ENCODE measurements at regions of chr12 and their contacts with region 1.

Region 1: DNA sequence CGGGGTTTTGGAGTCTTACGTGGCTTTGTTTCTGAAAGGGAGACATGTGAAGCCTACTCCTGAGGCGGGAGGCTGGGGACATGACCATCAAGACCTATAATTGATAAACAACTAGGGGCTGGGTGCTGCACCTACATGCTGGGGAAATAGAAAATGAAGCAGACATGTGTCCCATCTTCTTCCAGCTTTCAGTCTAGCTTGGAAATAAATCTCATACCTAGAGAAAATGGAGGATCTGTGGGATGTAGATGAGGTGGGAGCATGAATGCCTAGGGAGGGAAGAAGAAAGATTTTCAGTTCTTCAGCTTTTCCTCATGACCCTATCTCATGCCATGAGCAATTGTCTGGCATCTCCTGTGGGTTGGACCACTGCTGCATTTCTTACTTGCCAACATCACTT is 22.1 kb downstream of the EMP1 start:
- DNase-seq: no peak
- ATAC-seq: no peak
- H3K4me3 ChIP-seq: no peak overlapping the region
- H3K27ac ChIP-seq: no peak overlapping the region
- H3K4me1 ChIP-seq: peaks cover 3% of the 10 kb centered on the region
- H3K27me3 ChIP-seq: no peaks in the 10 kb centered on the region
- CTCF ChIP-seq: no peak
- POLR2A ChIP-seq: no peak

Region 2: DNA sequence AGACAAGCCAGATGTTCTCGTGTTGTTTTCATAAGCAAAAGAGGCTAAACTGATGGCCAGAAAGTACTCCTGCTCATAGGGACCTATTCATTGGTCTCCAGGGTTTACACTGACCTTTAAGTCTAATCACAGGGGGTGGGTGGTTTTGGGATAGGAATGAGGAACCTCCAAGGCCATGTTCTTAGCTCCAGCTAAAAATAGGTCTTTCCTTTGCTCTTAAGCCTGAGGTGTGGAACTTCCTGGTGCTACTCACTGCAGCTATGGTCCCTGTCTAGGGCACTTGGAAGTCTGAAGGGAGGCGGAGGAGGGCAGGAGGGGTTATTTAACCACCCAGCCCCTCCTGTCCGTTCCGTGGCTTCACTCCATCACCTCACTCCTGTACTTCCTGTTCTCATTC is 308.6 kb before region 1 on chr12:
- intact Hi-C with region 1: loop called (anchors 5 kb)
- DNase-seq: peak in 1 of 4 donors; percentile 29
- ATAC-seq: peak; percentile 42
- H3K4me3 ChIP-seq: no peak overlapping the region
- H3K27ac ChIP-seq: no peak overlapping the region
- H3K4me1 ChIP-seq: peaks cover 6% of the 10 kb centered on the region
- H3K27me3 ChIP-seq: no peaks in the 10 kb centered on the region
- CTCF ChIP-seq: no peak
- POLR2A ChIP-seq: no peak

Region 3: GRCh38 chr12:13268581-13268980 is 49.9 kb after region 1 on chr12:
- intact Hi-C with region 1: no loop called
- DNase-seq: no peak
- ATAC-seq: no peak
- H3K4me3 ChIP-seq: no peak overlapping the region
- H3K27ac ChIP-seq: no peak overlapping the region
- H3K4me1 ChIP-seq: no peaks in the 10 kb centered on the region
- H3K27me3 ChIP-seq: no peaks in the 10 kb centered on the region
- CTCF ChIP-seq: no peak
- POLR2A ChIP-seq: no peak

Region 4: DNA sequence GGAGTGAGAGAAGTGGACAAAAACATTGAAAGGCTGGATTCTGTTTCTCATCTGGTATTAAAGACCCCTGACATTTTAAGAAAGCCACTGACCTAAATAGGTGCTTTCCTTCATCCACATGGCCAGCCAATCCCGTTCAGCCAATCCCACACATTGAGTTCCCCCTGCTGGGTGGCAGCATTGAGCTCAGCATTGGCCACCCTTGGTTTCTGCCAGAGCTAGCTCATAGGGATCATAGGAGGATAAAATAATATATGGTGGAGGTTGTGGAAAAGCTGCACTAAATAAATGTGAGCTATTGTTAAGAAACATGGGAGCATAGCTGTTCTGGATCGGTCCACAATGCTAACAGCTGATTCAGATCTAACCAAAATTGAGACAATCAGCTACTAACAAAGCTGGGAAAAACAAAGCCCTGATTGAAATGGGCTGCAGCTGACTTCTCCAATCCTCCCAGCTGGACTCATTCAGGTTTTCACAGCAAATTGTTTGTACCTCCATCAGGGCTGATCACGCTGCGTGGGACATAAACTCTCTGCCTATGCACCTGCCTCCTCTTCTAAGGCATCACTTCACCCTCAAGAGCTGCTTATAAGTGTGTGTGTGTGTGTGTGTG is 234.4 kb after region 1 on chr12:
- intact Hi-C with region 1: no loop called
- DNase-seq: no peak
- ATAC-seq: no peak
- H3K4me3 ChIP-seq: no peak overlapping the region
- H3K27ac ChIP-seq: no peak overlapping the region
- H3K4me1 ChIP-seq: no peaks in the 10 kb centered on the region
- H3K27me3 ChIP-seq: no peaks in the 10 kb centered on the region
- CTCF ChIP-seq: no peak
- POLR2A ChIP-seq: no peak

Region 5: GRCh38 chr12:13606290-13606689 is 387.6 kb after region 1 on chr12:
- intact Hi-C with region 1: no loop called
- DNase-seq: no peak
- ATAC-seq: no peak
- H3K4me3 ChIP-seq: no peak overlapping the region
- H3K27ac ChIP-seq: no peak overlapping the region
- H3K4me1 ChIP-seq: peaks cover 6% of the 10 kb centered on the region
- H3K27me3 ChIP-seq: no peaks in the 10 kb centered on the region
- CTCF ChIP-seq: no peak
- POLR2A ChIP-seq: no peak

Measured in body of pancreas (tissue), 4 donors.